ENCODE measurements at regions of chr7 and their contacts with region 1.

Region 1: DNA sequence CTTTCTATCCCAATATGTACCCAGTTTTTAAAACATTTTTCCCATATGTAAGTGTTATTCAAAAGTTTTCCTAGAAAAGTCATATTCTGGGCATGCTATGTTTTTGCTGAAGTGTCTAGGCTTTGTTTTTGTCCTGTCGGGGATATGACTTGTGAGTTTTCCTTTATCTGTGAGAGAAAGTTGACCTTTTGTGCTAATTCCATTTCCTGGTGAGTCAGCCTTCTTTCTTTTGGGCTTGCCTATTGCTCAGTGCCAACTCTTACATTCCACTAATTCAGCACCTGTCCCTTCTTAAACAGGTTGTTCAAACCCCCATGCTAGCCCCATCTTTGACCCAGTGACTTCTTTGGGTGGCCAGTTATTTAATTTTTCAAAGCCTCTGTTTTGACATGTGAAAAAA is 146.2 kb downstream of the AHR start:
- DNase-seq: peak; percentile 94
- H3K4me3 ChIP-seq: peak overlapping the region in 1 of 3 experiments; percentile 56
- H3K27ac ChIP-seq: peak overlapping the region; percentile 91
- H3K4me1 ChIP-seq: peaks cover 35% of the 10 kb centered on the region
- H3K27me3 ChIP-seq: no peaks in the 10 kb centered on the region
- CTCF ChIP-seq: no peak
- POLR2A ChIP-seq: no peak

Region 2: GRCh38 chr7:17304926-17305325 is 139.7 kb before region 1 on chr7:
- CTCF ChIA-PET with region 1: interaction called, 11 read pairs
- POLR2A ChIA-PET with region 1: no interaction called
- dilution Hi-C with region 1: loop called (anchors 10 kb)
- intact Hi-C with region 1: loop called (anchors 1 kb)
- DNase-seq: peak; percentile 94
- H3K4me3 ChIP-seq: peak overlapping the region in 1 of 3 experiments; percentile 27
- H3K27ac ChIP-seq: peak overlapping the region; percentile 79
- H3K4me1 ChIP-seq: peaks cover 52% of the 10 kb centered on the region
- H3K27me3 ChIP-seq: no peaks in the 10 kb centered on the region
- CTCF ChIP-seq: no peak
- POLR2A ChIP-seq: no peak

Region 3: GRCh38 chr7:17311952-17312351 is 132.7 kb before region 1 on chr7:
- CTCF ChIA-PET with region 1: interaction called, 4 read pairs
- POLR2A ChIA-PET with region 1: no interaction called
- dilution Hi-C with region 1: loop called (anchors 10 kb)
- intact Hi-C with region 1: loop called (anchors 1 kb)
- DNase-seq: no peak
- H3K4me3 ChIP-seq: no peak overlapping the region
- H3K27ac ChIP-seq: no peak overlapping the region
- H3K4me1 ChIP-seq: peaks cover 33% of the 10 kb centered on the region
- H3K27me3 ChIP-seq: no peaks in the 10 kb centered on the region
- CTCF ChIP-seq: no peak
- POLR2A ChIP-seq: no peak

Region 4: GRCh38 chr7:17370092-17370491 is 74.6 kb before region 1 on chr7:
- CTCF ChIA-PET with region 1: no interaction called
- POLR2A ChIA-PET with region 1: no interaction called
- dilution Hi-C with region 1: no loop called
- intact Hi-C with region 1: loop called (anchors 1 kb)
- DNase-seq: no peak
- H3K4me3 ChIP-seq: no peak overlapping the region
- H3K27ac ChIP-seq: no peak overlapping the region
- H3K4me1 ChIP-seq: peaks cover 23% of the 10 kb centered on the region
- H3K27me3 ChIP-seq: no peaks in the 10 kb centered on the region
- CTCF ChIP-seq: no peak
- POLR2A ChIP-seq: no peak

Region 5: DNA sequence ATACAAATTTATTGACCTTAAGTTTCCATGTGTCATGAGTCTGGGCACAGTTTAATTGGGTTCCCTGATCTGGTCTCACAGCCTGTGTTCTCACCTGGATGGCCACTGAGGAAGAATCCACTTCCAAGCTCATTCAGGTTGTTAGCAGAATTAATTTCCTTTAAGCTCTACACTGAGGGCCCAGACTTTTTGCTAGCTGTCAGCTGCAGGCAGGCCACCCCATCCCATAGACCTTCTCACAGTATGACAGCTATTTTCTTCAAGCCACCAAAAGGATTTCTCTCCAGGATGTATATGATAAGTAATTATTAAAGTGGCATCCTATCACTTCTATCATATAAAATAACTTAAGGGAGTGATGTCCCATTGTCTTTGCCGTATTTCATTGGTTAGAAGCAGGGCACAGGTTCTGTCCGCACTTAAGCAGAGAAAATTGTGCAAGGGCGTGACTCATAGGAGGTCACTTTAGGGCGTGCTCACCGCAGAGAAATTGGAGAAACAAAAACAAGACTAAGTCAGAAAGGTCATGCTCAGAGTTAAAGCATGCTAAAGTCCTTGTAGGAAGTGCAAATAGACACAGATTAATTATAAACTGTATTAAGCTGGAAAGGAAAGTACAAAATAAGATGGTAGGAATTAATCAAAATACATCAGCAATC is 36.3 kb before region 1 on chr7:
- CTCF ChIA-PET with region 1: interaction called, 5 read pairs
- POLR2A ChIA-PET with region 1: interaction called, 3 read pairs
- dilution Hi-C with region 1: no loop called
- intact Hi-C with region 1: loop called (anchors 5 kb)
- DNase-seq: peak; percentile 80
- H3K4me3 ChIP-seq: no peak overlapping the region
- H3K27ac ChIP-seq: peak overlapping the region; percentile 26
- H3K4me1 ChIP-seq: peaks cover 33% of the 10 kb centered on the region
- H3K27me3 ChIP-seq: no peaks in the 10 kb centered on the region
- CTCF ChIP-seq: no peak
- POLR2A ChIP-seq: no peak

Region 6: DNA sequence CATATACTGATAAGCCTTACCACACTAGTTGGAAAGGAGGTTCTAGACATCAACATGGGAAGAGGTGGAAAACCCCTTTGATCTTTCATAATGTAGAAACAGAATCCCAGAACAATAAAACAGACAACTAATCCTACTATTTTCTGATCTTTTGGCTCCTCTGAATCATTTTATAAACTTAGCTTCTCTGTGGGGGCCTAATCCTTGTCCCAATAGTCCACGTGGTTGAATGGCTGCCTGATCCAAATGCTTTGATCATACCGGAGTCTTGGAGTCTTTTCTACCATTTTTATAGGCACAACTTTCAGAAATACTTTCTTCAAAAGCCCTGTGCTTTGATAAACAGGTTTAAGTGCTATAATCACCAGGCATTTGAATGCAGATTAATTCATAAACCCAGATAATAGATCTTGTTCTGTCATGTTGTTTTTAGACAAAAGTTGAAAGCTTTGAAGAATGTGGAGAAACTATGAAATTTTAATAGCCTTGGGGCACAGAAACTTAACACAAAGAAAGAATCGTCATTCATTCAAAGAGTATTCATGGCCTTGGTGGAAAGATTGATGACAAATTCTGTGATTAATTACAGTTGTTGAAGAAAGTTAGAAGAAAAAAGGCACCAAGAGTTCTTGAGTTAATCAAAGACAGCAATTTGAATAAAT is 17.5 kb after region 1 on chr7:
- CTCF ChIA-PET with region 1: interaction called, 5 read pairs
- POLR2A ChIA-PET with region 1: no interaction called
- dilution Hi-C with region 1: no loop called
- intact Hi-C with region 1: loop called (anchors 2 kb)
- DNase-seq: no peak
- H3K4me3 ChIP-seq: no peak overlapping the region
- H3K27ac ChIP-seq: no peak overlapping the region
- H3K4me1 ChIP-seq: peaks cover 7% of the 10 kb centered on the region
- H3K27me3 ChIP-seq: no peaks in the 10 kb centered on the region
- CTCF ChIP-seq: no peak
- POLR2A ChIP-seq: no peak

Region 7: GRCh38 chr7:17523813-17524741 is 79.4 kb after region 1 on chr7:
- CTCF ChIA-PET with region 1: interaction called, 6 read pairs
- POLR2A ChIA-PET with region 1: no interaction called
- dilution Hi-C with region 1: no loop called
- intact Hi-C with region 1: loop called (anchors 1 kb)
- DNase-seq: no peak
- H3K4me3 ChIP-seq: no peak overlapping the region
- H3K27ac ChIP-seq: no peak overlapping the region
- H3K4me1 ChIP-seq: peaks cover 22% of the 10 kb centered on the region
- H3K27me3 ChIP-seq: no peaks in the 10 kb centered on the region
- CTCF ChIP-seq: no peak
- POLR2A ChIP-seq: no peak

Region 8: DNA sequence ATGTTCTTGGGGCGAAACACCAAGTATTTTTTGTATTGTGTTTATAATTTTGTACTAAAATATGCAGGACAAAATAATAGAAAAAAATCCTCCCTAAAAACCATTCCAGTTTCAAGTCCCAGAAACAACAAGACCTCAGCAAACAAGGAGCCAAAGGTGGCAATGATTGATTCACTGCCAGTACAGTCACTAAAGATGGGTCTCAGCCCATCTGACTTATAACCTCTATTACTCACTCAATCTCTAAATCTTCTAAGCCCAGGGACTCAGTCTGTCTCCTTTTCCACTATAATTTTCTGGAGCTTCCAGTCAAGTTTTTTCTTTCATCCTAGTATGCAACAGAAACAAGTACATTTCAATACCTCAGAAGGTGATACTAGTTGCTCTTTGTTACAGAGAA is 462.3 kb after region 1 on chr7:
- CTCF ChIA-PET with region 1: no interaction called
- POLR2A ChIA-PET with region 1: no interaction called
- dilution Hi-C with region 1: no loop called
- intact Hi-C with region 1: no loop called
- DNase-seq: no peak
- H3K4me3 ChIP-seq: no peak overlapping the region
- H3K27ac ChIP-seq: no peak overlapping the region
- H3K4me1 ChIP-seq: peaks cover 4% of the 10 kb centered on the region
- H3K27me3 ChIP-seq: no peaks in the 10 kb centered on the region
- CTCF ChIP-seq: no peak
- POLR2A ChIP-seq: no peak